ENCODE measurements at regions of chr1 and their contacts with region 1.

Region 1: GRCh38 chr1:29033829-29034466 is 89.8 kb downstream of the TMEM200B start:
- DNase-seq: no peak
- H3K4me3 ChIP-seq: no peak overlapping the region
- H3K27ac ChIP-seq: no peak overlapping the region
- H3K4me1 ChIP-seq: no peaks in the 10 kb centered on the region; a peak in 1 of 7 replicates
- H3K27me3 ChIP-seq: no peaks in the 10 kb centered on the region
- CTCF ChIP-seq: peak in 2 of 3 experiments; percentile 38 to 44; a peak in 2 of 4 replicates
- EP300 ChIP-seq: no peak
- POLR2A ChIP-seq: no peak
- RAD21 ChIP-seq: peak; percentile 81 to 83

Region 2: GRCh38 chr1:28756846-28757245 is 277.1 kb before region 1 on chr1:
- CTCF ChIA-PET with region 1: no interaction called
- POLR2A ChIA-PET with region 1: no interaction called
- DNase-seq: no peak
- H3K4me3 ChIP-seq: no peak overlapping the region
- H3K27ac ChIP-seq: no peak overlapping the region
- H3K4me1 ChIP-seq: peaks cover 0 to 9% (median 1%) of the 10 kb centered on the region in 4 experiments; a peak in 2 of 7 replicates
- H3K27me3 ChIP-seq: no peaks in the 10 kb centered on the region
- CTCF ChIP-seq: peak in 2 of 3 experiments; percentile 15 to 51; a peak in 2 of 4 replicates
- EP300 ChIP-seq: no peak
- POLR2A ChIP-seq: no peak
- RAD21 ChIP-seq: peak in 1 of 2 experiments; percentile 37; a peak in 2 of 4 replicates

Region 3: GRCh38 chr1:28983509-28984310 is 50.2 kb before region 1 on chr1:
- CTCF ChIA-PET with region 1: interaction called, 12 read pairs
- POLR2A ChIA-PET with region 1: no interaction called
- DNase-seq: peak in 1 of 2 experiments; percentile 58
- H3K4me3 ChIP-seq: no peak overlapping the region
- H3K27ac ChIP-seq: 0 out of 2 replicates have a peak overlapping the region, but pooled peaks have one; percentile 46
- H3K4me1 ChIP-seq: peaks cover 2 to 7% (median 5%) of the 10 kb centered on the region in 4 experiments
- H3K27me3 ChIP-seq: no peaks in the 10 kb centered on the region
- CTCF ChIP-seq: peak; percentile 35 to 53 (median 51)
- EP300 ChIP-seq: no peak
- POLR2A ChIP-seq: no peak
- RAD21 ChIP-seq: peak; percentile 39 to 50

Region 4: DNA sequence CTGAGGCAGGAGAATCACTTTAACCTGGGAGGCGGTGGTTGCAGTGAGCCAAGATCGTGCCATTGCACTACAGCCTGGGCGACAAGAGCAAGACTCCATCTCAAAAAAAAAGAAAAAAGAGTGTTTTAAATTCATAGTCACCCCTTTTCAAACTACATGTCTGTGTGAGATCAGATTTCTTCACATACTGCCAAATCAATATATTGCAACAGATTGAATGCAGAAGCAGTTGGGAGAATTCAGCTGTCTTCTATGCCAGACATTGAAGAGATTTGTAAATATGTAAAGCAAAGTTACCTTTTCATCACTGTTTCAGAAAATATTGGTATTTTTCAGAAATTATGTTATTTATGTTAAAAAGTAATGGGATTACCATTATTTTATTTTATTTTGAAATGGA is 11.3 kb before region 1 on chr1:
- CTCF ChIA-PET with region 1: interaction called, 43 read pairs
- POLR2A ChIA-PET with region 1: no interaction called
- DNase-seq: no peak
- H3K4me3 ChIP-seq: no peak overlapping the region
- H3K27ac ChIP-seq: no peak overlapping the region
- H3K4me1 ChIP-seq: no peaks in the 10 kb centered on the region
- H3K27me3 ChIP-seq: no peaks in the 10 kb centered on the region
- CTCF ChIP-seq: no peak
- EP300 ChIP-seq: no peak
- POLR2A ChIP-seq: no peak
- RAD21 ChIP-seq: no peak

Region 5: DNA sequence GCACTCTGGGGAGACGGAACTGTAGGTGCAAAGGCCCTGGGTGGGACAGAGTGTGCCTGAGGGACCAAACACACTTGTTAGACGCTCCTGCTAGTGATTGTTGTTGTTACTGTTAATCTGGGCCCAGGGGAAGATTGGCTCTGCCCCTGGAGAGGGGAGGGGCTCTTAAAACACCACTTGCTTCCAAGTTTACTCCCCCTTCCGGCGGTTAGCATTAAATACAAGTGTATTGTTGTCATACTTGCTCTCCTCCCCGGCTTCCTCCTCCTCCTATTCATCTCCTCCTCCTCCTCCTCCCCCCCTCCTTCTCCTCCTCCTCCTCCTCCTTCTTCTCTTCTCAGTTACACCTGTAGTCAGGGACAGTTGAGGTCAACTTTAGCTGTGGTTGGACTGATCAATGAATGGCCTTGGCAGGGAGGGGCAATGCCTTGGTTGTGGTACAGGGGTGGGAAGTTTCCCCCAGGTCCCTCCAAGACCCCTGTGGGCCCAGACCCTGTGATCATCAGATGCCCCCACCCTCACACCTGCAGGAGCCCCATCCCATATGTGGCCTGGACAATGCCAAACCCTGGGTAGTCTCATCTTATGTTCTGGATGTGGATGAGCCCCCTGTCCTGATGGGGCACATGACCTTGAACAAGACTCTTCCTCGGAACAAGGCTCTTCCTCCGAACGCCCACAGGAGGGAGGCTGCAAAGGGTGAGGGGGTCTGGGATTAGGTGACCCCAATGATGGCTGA is 419.7 kb after region 1 on chr1:
- CTCF ChIA-PET with region 1: no interaction called
- POLR2A ChIA-PET with region 1: no interaction called
- DNase-seq: peak; percentile 43 to 62
- H3K4me3 ChIP-seq: no peak overlapping the region
- H3K27ac ChIP-seq: no peak overlapping the region
- H3K4me1 ChIP-seq: peaks cover 0 to 11% (median 5%) of the 10 kb centered on the region in 4 experiments; a peak in 6 of 7 replicates
- H3K27me3 ChIP-seq: no peaks in the 10 kb centered on the region
- CTCF ChIP-seq: peak; percentile 5 to 66 (median 42)
- EP300 ChIP-seq: no peak
- POLR2A ChIP-seq: no peak
- RAD21 ChIP-seq: peak; percentile 30 to 43; a peak in 3 of 4 replicates

Measured in H1 (cell line).